CD14-positive monocyte (primary cell): ENCODE measurements at regions of chr6 and their contacts with region 1.

Region 1: GRCh38 chr6:3052481-3053230 is 15.6 kb upstream of the RIPK1 start:
- DNase-seq: no peak
- H3K4me3 ChIP-seq: peak overlapping the region in 2 of 3 experiments; percentile 70 to 78
- H3K4me3 Mint-ChIP-seq: peak overlapping the region; percentile 84 to 87
- H3K27ac ChIP-seq: peak overlapping the region in 1 of 2 donors; percentile 74
- H3K27ac Mint-ChIP-seq: peak overlapping the region; percentile 11 to 92 (median 73)
- H3K4me1 ChIP-seq: peaks cover 22 to 29% of the 10 kb centered on the region in 2 donors
- H3K4me1 Mint-ChIP-seq: peaks cover 23% of the 10 kb centered on the region
- H3K27me3 ChIP-seq: no peaks in the 10 kb centered on the region
- H3K27me3 Mint-ChIP-seq: peaks cover 3 to 5% (median 5%) of the 10 kb centered on the region in 3 donors
- CTCF ChIP-seq: no peak

Region 2: GRCh38 chr6:2765166-2765895 is 287.3 kb before region 1 on chr6 and contains the start of gene WRNIP1:
- intact Hi-C with region 1: loop called in 1 of 2 experiments (anchors 10 kb)
- DNase-seq: peak; percentile 98 to 99 (median 99)
- H3K4me3 ChIP-seq: peak within 1 kb of the TSS; percentile 82 to 98 (median 92)
- H3K4me3 Mint-ChIP-seq: peak within 1 kb of the TSS; percentile 91 to 94
- H3K27ac ChIP-seq: peak within 1 kb of the TSS; percentile 88 to 89
- H3K27ac Mint-ChIP-seq: peak within 1 kb of the TSS; percentile 98 to 99 (median 99)
- H3K4me1 ChIP-seq: peaks cover 39 to 58% of the 10 kb centered on the region in 2 donors
- H3K4me1 Mint-ChIP-seq: peaks cover 52% of the 10 kb centered on the region
- H3K27me3 ChIP-seq: no peaks in the 10 kb centered on the region
- H3K27me3 Mint-ChIP-seq: peaks cover 0 to 2% (median 0%) of the 10 kb centered on the region in 3 donors
- CTCF ChIP-seq: peak; percentile 86
- polyA plus RNA-seq, gene WRNIP1: 17.5 to 25.8 (median 17.8) TPM

Region 3: DNA sequence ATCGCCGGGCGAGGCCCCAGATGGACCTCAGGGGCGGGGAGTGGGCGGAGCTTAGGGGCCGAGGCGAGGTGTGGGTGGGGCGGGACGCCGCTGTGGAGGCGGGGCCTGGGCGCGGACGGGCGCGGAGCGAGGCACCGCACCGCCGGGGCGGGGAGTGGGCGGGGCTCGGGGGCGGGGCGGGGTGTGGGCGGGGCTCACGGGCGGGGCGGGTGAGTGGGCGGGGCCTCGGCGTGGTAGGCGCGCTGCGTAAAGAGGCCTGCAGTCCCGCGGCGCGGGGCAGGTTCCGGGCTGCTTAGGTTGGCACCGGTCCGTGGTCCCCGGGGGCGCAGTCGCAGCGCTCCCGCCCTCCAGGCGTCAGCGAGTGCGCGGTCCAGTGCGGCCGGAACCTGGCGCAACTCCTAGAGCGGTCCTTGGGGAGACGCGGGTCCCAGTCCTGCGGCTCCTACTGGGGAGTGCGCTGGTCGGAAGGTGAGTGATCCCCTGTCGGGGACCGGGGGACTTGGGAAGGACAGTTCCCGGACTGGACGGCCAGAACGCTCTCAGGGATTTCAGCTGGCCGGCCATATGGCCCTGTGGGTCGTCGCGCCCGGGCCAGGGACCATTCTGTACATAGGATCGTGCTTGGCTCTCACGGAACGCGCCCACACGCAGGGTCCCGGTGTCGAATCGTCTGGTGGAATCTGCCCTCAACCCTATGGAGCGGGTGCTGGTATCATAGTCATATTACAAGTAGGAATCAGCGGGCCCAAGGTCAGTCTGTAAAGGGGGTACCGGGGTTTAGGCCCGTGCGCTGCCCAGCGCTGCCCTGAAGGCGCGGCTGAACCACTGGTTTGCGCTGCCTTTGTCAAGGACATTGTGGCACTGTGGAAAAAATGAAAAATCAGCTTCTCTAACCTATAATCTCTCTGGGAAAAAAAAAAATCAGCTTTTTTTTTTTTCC is 52.8 kb before region 1 on chr6 and contains the start of gene NQO2:
- intact Hi-C with region 1: loop called (anchors 2 kb)
- DNase-seq: peak; percentile 78 to 84 (median 79)
- H3K4me3 ChIP-seq: peak within 1 kb of the TSS; percentile 84 to 95 (median 93)
- H3K4me3 Mint-ChIP-seq: peak within 1 kb of the TSS; percentile 83 to 94
- H3K27ac ChIP-seq: peak within 1 kb of the TSS; percentile 73 to 90
- H3K27ac Mint-ChIP-seq: peak within 1 kb of the TSS; percentile 88 to 96 (median 91)
- H3K4me1 ChIP-seq: peaks cover 35 to 40% of the 10 kb centered on the region in 2 donors
- H3K4me1 Mint-ChIP-seq: peaks cover 32% of the 10 kb centered on the region
- H3K27me3 ChIP-seq: no peaks in the 10 kb centered on the region
- H3K27me3 Mint-ChIP-seq: peaks cover 0 to 5% (median 3%) of the 10 kb centered on the region in 3 donors
- CTCF ChIP-seq: no peak
- polyA plus RNA-seq, gene NQO2: 30.0 to 281 (median 146) TPM

Region 4: GRCh38 chr6:3013479-3013878 is 39.2 kb before region 1 on chr6:
- intact Hi-C with region 1: loop called in 1 of 2 experiments (anchors 5 kb)
- DNase-seq: peak; percentile 85 to 92 (median 91)
- H3K4me3 ChIP-seq: no peak overlapping the region
- H3K4me3 Mint-ChIP-seq: peak overlapping the region in 1 of 2 donors; percentile 26
- H3K27ac ChIP-seq: peak overlapping the region; percentile 41 to 73
- H3K27ac Mint-ChIP-seq: peak overlapping the region; percentile 86 to 96 (median 92)
- H3K4me1 ChIP-seq: peaks cover 17 to 19% of the 10 kb centered on the region in 2 donors
- H3K4me1 Mint-ChIP-seq: peaks cover 16% of the 10 kb centered on the region
- H3K27me3 ChIP-seq: no peaks in the 10 kb centered on the region
- H3K27me3 Mint-ChIP-seq: peaks cover 0 to 7% (median 3%) of the 10 kb centered on the region in 3 donors
- CTCF ChIP-seq: no peak